ENCODE measurements at regions of chr17 and their contacts with region 1.

Region 1: DNA sequence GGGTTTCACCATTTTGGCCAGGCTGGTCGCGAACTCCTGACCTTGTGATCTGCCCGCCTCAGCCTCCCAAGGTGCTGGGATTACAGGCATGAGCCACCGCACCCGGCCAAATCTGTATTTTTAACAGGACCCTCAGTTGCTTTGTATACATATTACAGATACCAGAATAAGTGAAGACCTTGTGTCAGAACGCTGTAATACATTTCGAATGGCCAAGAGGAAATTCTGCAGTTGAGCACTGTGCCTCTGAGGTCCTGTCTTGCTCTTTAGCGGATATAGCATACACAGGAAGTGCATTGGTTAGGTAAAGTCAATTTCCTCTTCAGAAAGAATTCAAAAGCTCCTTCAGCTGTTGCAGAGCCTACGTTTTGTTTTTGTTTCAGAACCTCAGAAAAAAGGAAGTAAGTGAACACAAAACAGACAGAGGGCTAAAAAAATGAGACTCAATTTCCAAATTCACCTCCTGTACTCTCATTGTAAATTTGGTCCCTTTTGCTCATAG is 15.7 kb downstream of the CRLF3 start:
- DNase-seq: peak; percentile 73
- H3K4me3 Mint-ChIP-seq: peak overlapping the region; percentile 83
- H3K27ac Mint-ChIP-seq: peak overlapping the region; percentile 98
- H3K4me1 Mint-ChIP-seq: peaks cover 75% of the 10 kb centered on the region
- H3K27me3 Mint-ChIP-seq: no peaks in the 10 kb centered on the region

Region 2: DNA sequence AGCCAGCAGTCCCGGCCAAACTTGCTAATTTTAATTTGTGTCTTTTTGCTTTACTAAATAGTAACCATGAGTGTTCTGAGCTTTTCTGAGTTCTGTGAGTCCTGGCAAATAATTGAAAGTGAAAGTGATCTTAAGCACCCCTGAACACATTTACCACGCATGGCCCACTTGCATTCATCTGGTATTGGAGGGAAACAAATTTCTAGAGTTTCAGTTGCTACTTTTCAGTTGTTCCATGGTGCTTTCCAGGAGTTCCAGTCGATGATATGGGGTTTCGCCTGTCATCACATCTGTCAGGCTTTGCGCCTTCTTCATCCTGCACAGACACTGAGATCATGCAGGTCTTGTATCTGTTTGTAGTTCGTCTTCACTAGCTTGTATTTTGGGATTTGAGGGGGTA is 28.5 kb before region 1 on chr17:
- CTCF ChIA-PET with region 1: no interaction called
- POLR2A ChIA-PET with region 1: no interaction called
- DNase-seq: peak; percentile 42
- H3K4me3 Mint-ChIP-seq: peak overlapping the region; percentile 8
- H3K27ac Mint-ChIP-seq: peak overlapping the region; percentile 81
- H3K4me1 Mint-ChIP-seq: peaks cover 15% of the 10 kb centered on the region
- H3K27me3 Mint-ChIP-seq: no peaks in the 10 kb centered on the region

Region 3: DNA sequence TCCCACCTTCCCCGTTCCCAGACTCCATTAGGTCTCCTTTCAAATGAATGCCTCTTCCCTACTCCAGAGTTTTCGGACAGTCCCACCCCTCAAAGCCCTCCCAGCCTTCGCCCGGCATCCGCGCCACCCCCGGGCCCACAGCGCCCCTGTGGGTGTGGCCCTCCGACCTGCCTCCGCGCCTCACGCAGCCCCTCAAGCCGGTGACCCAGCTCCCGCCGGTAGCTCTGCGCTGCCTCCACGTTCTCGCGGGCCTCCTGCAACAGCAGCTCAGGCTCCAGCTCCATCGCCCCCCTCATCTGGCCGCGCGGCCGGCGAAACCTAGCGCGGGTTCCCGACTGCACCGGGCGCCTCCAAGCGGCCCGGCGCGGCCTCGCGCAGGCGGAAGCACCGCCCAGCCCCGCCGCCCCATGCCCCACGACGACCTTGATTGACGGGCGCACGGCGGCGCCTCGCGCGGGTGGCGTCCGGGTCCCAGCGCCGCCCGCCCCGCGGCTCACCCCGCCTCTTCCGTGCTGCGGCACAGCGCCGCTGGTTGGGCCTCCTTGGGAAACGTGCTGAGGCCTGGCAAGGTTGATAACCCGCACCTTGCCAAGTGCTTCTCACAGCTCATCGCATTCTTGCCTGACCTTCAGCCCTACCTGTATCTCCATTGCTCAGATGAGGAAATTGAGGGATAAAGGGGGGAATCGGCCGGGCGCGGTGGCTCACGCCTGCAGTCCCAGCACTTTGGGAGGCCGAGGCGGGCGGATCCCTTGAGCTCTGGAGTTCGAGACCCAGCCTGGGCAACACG is 15.7 kb after region 1 on chr17 and contains the start of gene CRLF3:
- CTCF ChIA-PET with region 1: interaction called, 39 read pairs
- POLR2A ChIA-PET with region 1: interaction called, 6 read pairs
- DNase-seq: peak; percentile 90
- H3K4me3 Mint-ChIP-seq: peak within 1 kb of the TSS; percentile 94
- H3K27ac Mint-ChIP-seq: peak within 1 kb of the TSS; percentile 93
- H3K4me1 Mint-ChIP-seq: peaks cover 41% of the 10 kb centered on the region
- H3K27me3 Mint-ChIP-seq: no peaks in the 10 kb centered on the region
- total RNA-seq, gene CRLF3: 68.6 to 68.8 TPM

Measured in activated CD4-positive, alpha-beta T cell treated with anti-CD3 and anti-CD28 coated beads, Interleukin-2, amount 10 ng/mL, durations not matched to agents 7 days and 5 days (primary cell).